PC-3 (cell line): ENCODE measurements at regions of chr1 and their contacts with region 1.

Region 1: GRCh38 chr1:8817406-8818324 is at the start of gene RERE:
- DNase-seq: peak; percentile 95
- ATAC-seq: peak; percentile 75
- H3K4me3 ChIP-seq: peak within 1 kb of the TSS; percentile 96
- H3K27ac ChIP-seq: peak within 1 kb of the TSS; percentile 74
- H3K4me1 ChIP-seq: peaks cover 55% of the 10 kb centered on the region
- H3K27me3 ChIP-seq: no peaks in the 10 kb centered on the region
- CTCF ChIP-seq: no peak
- total RNA-seq, gene RERE: 24.2 and 45.2 TPM in 2 replicates

Region 2: DNA sequence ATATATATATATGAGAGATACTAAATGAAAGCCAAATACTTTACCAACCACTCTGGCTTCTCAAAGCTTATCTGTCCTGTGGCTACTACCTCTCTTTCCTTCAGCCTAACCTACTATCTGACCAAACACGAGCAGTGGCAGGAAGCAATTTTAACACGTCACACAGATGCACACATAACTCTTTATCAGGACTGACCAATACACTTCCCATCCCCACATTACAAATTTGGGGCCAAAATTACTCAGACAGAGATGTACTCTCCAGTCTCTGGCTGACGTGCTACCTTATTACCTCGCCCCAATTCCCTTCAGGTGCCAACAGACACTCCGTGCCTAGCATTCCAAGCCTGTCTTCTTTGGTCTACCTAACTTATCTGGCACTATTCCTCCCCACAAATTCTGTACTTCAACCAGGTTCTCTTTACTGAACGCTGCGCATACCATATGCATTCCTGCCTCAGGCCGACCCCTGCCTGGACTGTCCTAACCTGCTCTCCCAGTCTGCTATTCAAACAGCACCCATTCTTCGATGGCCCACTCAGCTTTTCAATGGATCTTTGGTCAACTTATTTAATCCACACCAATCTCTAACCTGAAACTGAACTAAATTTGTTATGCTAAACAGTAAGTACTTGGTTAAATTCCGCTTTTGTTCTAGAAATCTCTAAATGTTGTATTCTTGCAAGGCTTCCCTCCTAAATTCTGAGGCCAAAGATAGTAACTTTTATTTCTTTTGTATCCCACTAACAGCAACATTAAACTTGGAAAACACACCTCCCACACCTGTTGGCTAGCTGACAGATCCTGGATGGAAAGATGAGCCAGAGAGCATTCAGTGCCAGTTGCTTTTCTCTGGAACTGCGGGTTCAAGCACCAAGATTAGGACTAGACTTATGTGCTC is 28.1 kb before region 1 on chr1:
- CTCF ChIA-PET with region 1: no interaction called
- POLR2A ChIA-PET with region 1: no interaction called
- intact Hi-C with region 1: loop called (anchors 5 kb)
- DNase-seq: peak; percentile 79
- ATAC-seq: peak; percentile 19
- H3K4me3 ChIP-seq: peak overlapping the region; percentile 2; the same call in 1 of the 2 replicates
- H3K27ac ChIP-seq: peak overlapping the region; percentile 64
- H3K4me1 ChIP-seq: peaks cover 39% of the 10 kb centered on the region
- H3K27me3 ChIP-seq: no peaks in the 10 kb centered on the region
- CTCF ChIP-seq: no peak

Region 3: DNA sequence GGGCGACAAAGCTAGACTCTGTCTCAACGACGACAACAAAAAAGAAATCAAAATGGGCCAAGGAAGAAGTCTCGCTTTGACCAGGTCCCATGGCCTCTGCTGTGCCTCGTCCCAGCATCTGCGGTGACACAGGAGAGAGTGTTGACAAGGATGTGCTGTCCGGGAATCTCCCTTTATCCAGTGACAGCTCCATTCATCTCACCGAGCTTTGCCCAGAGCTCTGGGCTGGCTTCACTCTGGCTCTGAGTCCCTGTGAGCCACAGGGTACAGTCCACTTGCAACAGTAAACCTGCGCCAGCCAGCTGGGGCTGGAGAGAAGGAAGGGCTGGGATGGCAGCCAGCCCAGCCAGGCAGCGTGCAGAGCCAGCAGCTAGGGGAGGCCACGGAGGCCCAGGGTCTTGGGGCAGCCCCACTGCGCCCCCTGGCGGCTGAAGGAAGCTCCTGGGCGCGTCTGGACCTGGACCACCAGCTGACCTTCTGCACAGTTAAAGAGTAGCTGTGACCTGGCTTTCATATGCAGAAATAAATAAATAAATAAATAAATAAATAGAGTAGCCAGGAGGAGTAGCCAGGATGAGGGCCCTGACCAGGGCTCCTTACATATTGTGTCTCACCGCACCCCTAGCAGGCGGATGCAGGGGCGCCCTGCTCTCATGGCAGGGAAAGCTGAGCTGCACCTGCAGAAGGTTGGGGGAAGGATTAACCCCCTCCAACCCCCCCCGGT is 31.2 kb after region 1 on chr1:
- CTCF ChIA-PET with region 1: interaction called, 7 read pairs
- POLR2A ChIA-PET with region 1: interaction called, 7 read pairs
- intact Hi-C with region 1: loop called (anchors 2 kb)
- DNase-seq: peak; percentile 91
- ATAC-seq: peak; percentile 98
- H3K4me3 ChIP-seq: no peak overlapping the region
- H3K27ac ChIP-seq: no peak overlapping the region
- H3K4me1 ChIP-seq: peaks cover 5% of the 10 kb centered on the region
- H3K27me3 ChIP-seq: no peaks in the 10 kb centered on the region
- CTCF ChIP-seq: peak; percentile 73